Left ventricle myocardium superior (tissue), 1 donor: ENCODE measurements at regions of chr3 and their contacts with region 1.

Region 1: GRCh38 chr3:170689893-170690660 is 104.2 kb upstream of the SLC7A14 start:
- DNase-seq: peak; percentile 82
- ATAC-seq: peak; percentile 87

Region 2: GRCh38 chr3:170414202-170414663 is 275.8 kb before region 1 on chr3:
- intact Hi-C with region 1: loop called (anchors 10 kb)
- DNase-seq: no peak
- ATAC-seq: peak; percentile 64

Region 3: DNA sequence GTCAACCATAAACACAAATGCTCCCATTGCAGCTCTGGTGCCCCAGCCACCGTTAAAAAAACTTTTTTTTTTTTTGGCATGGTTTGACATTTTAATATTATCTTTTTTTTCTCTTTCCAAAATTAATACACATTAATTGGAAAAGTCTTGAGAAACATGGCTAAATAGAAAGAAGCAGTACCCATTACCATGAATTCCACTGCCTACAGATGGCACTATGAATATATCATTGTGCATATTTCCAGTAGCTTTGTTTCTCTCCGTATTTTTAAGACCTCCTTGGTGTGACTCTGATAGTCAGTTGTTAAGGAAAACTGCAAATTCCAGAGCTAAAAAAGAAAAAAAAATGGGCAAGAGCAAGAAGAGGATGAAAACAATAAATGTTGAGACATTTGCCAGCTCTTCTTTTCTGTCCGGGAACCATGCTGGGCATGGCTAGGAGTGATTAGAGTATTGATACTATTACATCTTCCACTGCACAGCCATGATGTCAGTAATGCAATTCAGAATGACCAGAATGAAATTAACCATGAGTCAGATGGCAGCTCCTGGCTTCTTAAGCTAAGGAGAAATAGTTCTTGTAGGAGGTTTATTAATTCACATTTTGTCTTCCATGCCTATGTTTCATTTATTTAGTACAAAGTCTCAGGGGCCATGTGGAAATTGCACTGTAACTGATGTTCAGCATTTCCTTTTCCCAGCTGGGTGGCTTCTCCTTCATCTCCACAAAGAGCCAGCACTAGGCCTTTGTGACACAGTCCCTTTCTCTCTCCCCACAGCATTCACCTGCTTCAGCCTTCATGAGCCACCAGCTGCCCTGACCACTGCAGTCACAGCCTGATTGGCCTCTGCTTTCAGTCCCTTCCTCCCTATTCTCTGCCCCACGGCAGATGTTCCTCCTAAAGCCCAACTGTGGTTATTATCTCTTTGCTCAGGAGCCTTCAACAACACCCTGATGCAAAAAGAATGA is 136.0 kb before region 1 on chr3:
- intact Hi-C with region 1: loop called (anchors 10 kb)
- DNase-seq: no peak
- ATAC-seq: no peak

Region 4: GRCh38 chr3:171072432-171072831 is 382.4 kb after region 1 on chr3:
- intact Hi-C with region 1: no loop called
- DNase-seq: no peak
- ATAC-seq: no peak

Region 5: DNA sequence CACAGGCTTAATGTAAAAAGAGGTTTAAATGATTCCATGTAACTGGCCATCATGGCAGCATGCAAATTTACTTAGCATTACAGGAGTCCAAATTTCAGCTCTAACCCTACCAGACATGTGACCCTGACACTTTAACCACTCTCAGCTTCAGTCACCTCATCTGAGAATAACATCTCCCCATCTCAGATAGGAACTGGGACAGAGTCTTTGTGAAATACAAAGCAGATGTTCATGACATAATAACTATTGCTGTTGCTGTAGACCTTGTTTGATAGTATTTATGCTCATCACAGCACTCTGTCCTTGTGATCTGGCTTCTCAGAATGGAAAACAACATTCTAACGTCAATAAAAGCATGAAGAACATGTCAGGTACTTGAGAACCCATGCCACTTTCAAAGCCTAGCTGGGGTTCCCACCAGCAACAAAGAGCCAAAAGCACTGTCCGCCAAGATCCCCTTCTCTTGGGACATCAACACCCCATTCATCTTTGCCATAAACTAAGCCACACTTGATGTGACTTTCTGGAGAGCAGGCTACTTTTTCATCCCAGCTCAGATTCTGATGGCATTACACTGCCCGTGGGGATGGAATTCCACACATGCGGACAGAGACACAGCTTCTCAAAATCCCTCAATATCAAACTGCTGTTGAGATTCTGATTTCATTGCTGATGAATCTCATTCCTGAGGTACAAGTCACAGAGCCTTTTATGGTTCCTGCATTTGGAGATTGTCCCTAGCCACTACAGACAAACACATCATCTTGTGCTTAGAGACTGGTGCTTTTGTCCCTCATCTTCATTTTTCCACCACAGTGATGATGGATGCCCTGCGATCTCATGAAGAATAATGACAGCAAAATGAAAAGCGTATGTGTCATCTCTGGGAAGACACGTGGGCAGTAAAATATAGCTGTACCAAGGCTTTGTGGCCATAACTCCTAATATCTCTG is 567.5 kb after region 1 on chr3:
- intact Hi-C with region 1: no loop called
- DNase-seq: no peak
- ATAC-seq: peak; percentile 38